HepG2 (cell line): ENCODE measurements at regions of chr11 and their contacts with region 1.

Region 1: DNA sequence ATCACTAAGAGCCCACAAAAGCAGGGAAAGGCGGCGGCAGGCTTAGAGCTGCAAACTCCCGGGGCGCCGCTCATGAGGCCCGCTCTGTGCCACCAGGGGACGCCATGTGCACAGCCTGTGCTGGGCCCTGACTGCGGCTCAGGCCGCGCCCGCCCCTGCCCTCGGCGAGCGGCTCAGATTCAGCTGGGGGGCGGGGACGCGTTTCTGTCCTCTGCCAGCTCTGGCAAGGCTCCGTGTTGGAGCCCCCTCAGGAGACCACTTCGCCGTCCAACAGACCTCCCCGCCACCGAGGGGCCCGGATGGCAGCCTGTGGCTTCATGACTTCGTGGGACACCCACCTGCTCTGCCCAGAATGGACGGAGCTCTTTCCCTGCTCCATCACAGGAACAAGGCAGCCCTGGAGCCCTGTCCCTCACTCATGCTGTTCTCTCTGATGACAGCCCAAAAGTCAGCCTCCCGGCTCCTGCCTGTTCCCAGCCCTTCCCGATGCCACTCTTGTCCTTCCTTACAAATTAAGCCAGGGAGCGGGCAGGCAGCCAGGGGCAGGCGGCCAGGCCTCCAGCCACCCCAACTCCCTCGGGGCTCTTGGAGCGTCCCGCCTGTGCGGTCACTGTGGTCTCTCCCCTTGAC is 69.1 kb downstream of the NAT10 start:
- DNase-seq: peak; percentile 43
- ATAC-seq: peak; percentile 99
- H3K4me3 ChIP-seq: peak overlapping the region in 1 of 3 experiments; percentile 41; a peak in 1 of 6 replicates
- H3K27ac ChIP-seq: no peak overlapping the region
- H3K4me1 ChIP-seq: peaks cover 7% of the 10 kb centered on the region; the same call in 1 of the 2 replicates
- H3K27me3 ChIP-seq: no peaks in the 10 kb centered on the region
- CTCF ChIP-seq: peak; percentile 99
- EP300 ChIP-seq: 0 out of 4 replicates have a peak, but pooled peaks of 1 of the 2 experiments have one; percentile 19
- POLR2A ChIP-seq: no peak
- RAD21 ChIP-seq: peak; percentile 100

Region 2: GRCh38 chr11:34149786-34150185 is 24.7 kb before region 1 on chr11:
- CTCF ChIA-PET with region 1: no interaction called
- POLR2A ChIA-PET with region 1: no interaction called
- in situ Hi-C with region 1: no loop called
- intact Hi-C with region 1: no loop called
- DNase-seq: no peak
- ATAC-seq: peak; percentile 69
- H3K4me3 ChIP-seq: no peak overlapping the region
- H3K27ac ChIP-seq: no peak overlapping the region
- H3K4me1 ChIP-seq: no peaks in the 10 kb centered on the region
- H3K27me3 ChIP-seq: no peaks in the 10 kb centered on the region
- CTCF ChIP-seq: peak; percentile 63
- EP300 ChIP-seq: no peak
- POLR2A ChIP-seq: no peak
- RAD21 ChIP-seq: peak; percentile 64; the same call in 1 of the 2 replicates

Region 3: GRCh38 chr11:34192481-34193401 is 18.2 kb after region 1 on chr11:
- CTCF ChIA-PET with region 1: no interaction called
- POLR2A ChIA-PET with region 1: no interaction called
- in situ Hi-C with region 1: no loop called
- intact Hi-C with region 1: no loop called
- DNase-seq: no peak
- ATAC-seq: no peak
- H3K4me3 ChIP-seq: no peak overlapping the region
- H3K27ac ChIP-seq: no peak overlapping the region
- H3K4me1 ChIP-seq: peaks cover 14% of the 10 kb centered on the region
- H3K27me3 ChIP-seq: no peaks in the 10 kb centered on the region
- CTCF ChIP-seq: no peak
- EP300 ChIP-seq: no peak
- POLR2A ChIP-seq: no peak
- RAD21 ChIP-seq: no peak

Region 4: GRCh38 chr11:34224434-34224966 is 50.0 kb after region 1 on chr11:
- CTCF ChIA-PET with region 1: no interaction called
- POLR2A ChIA-PET with region 1: no interaction called
- in situ Hi-C with region 1: no loop called
- intact Hi-C with region 1: loop called (anchors 1 kb)
- DNase-seq: peak; percentile 80
- ATAC-seq: peak; percentile 81
- H3K4me3 ChIP-seq: no peak overlapping the region
- H3K27ac ChIP-seq: peak overlapping the region; percentile 32
- H3K4me1 ChIP-seq: peaks cover 55% of the 10 kb centered on the region
- H3K27me3 ChIP-seq: no peaks in the 10 kb centered on the region
- CTCF ChIP-seq: no peak
- EP300 ChIP-seq: no peak
- POLR2A ChIP-seq: no peak
- RAD21 ChIP-seq: no peak

Region 5: GRCh38 chr11:34468209-34468841 is 293.8 kb after region 1 on chr11:
- CTCF ChIA-PET with region 1: interaction called, 3 read pairs
- POLR2A ChIA-PET with region 1: no interaction called
- in situ Hi-C with region 1: no loop called
- intact Hi-C with region 1: loop called (anchors 10 kb)
- DNase-seq: peak; percentile 30
- ATAC-seq: peak; percentile 54
- H3K4me3 ChIP-seq: no peak overlapping the region
- H3K27ac ChIP-seq: no peak overlapping the region
- H3K4me1 ChIP-seq: peaks cover 16% of the 10 kb centered on the region
- H3K27me3 ChIP-seq: no peaks in the 10 kb centered on the region
- CTCF ChIP-seq: peak; percentile 72
- EP300 ChIP-seq: no peak
- POLR2A ChIP-seq: no peak
- RAD21 ChIP-seq: peak; percentile 72

Region 6: GRCh38 chr11:34916015-34916842 is 741.7 kb after region 1 on chr11 and contains the starts of genes APIP and PDHX:
- CTCF ChIA-PET with region 1: no interaction called
- POLR2A ChIA-PET with region 1: no interaction called
- in situ Hi-C with region 1: loop called (anchors 25 kb)
- intact Hi-C with region 1: no loop called
- DNase-seq: peak; percentile 94
- ATAC-seq: peak; percentile 95
- H3K4me3 ChIP-seq: peak within 1 kb of the TSS; percentile 89 to 100 (median 98)
- H3K27ac ChIP-seq: peak within 1 kb of the TSS; percentile 99
- H3K4me1 ChIP-seq: peaks cover 52% of the 10 kb centered on the region
- H3K27me3 ChIP-seq: no peaks in the 10 kb centered on the region; a peak in 1 of 5 replicates
- CTCF ChIP-seq: no peak; the same call in 1 of the 2 replicates
- EP300 ChIP-seq: no peak
- POLR2A ChIP-seq: peak; percentile 94 to 96
- RAD21 ChIP-seq: 0 out of 2 replicates have a peak, but pooled peaks have one; percentile 27
- total RNA-seq, gene APIP: 31.0 and 41.8 TPM in 2 replicates
- total RNA-seq, gene PDHX: 73.8 and 106 TPM in 2 replicates